CD4-positive, alpha-beta memory T cell (primary cell): ENCODE measurements at regions of chr12 and their contacts with region 1.

Region 1: GRCh38 chr12:75437564-75437963 is 43.0 kb upstream of the GLIPR1 start:
- DNase-seq: peak; percentile 43 to 61 (median 51)
- H3K4me3 ChIP-seq: no peak overlapping the region
- H3K4me3 Mint-ChIP-seq: peak overlapping the region in 2 of 8 donors; percentile 17 to 43
- H3K27ac ChIP-seq: no peak overlapping the region
- H3K27ac Mint-ChIP-seq: peak overlapping the region in 5 of 7 donors; percentile 52 to 91 (median 57)
- H3K4me1 ChIP-seq: peaks cover 13% of the 10 kb centered on the region
- H3K4me1 Mint-ChIP-seq: peaks cover 11 to 17% (median 15%) of the 10 kb centered on the region in 4 donors
- H3K27me3 ChIP-seq: no peaks in the 10 kb centered on the region
- H3K27me3 Mint-ChIP-seq: no peaks in the 10 kb centered on the region

Region 2: DNA sequence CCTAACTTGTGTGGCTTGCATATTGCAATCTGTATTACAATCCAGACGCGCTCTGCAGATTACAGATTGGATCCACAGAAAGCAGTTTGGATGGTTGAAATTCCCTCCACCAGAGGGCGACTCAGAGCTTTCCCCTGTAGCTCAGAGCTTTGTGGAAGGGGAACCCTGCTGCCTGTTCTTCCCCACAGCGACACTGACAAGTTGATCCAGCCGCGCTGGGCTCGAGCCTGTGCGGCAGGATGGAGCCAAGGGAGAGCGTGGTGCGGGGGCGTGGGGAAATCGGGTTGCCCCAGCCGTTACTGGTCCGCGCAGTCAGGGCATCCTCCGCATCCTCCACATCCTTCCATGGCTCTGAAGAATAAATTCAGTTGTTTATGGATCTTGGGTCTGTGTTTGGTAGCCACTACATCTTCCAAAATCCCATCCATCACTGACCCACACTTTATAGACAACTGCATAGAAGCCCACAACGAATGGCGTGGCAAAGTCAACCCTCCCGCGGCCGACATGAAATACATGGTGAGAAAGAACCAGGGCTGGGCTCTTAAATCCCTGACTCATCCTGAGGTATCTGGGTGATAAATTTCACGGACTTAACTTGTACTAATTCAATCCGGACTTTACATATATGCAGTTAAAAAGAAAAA is 103.1 kb before region 1 on chr12 and contains the start of gene GLIPR1L1:
- CTCF ChIA-PET with region 1: interaction called, 10 read pairs
- POLR2A ChIA-PET with region 1: interaction called, 3 read pairs
- intact Hi-C with region 1: loop called (anchors 5 kb)
- DNase-seq: peak; percentile 76 to 82 (median 77)
- H3K4me3 ChIP-seq: peak within 1 kb of the TSS in 1 of 2 donors; percentile 54
- H3K4me3 Mint-ChIP-seq: peak within 1 kb of the TSS; percentile 70 to 86 (median 80)
- H3K27ac ChIP-seq: no peak within 1 kb of the TSS
- H3K27ac Mint-ChIP-seq: peak within 1 kb of the TSS in 1 of 7 donors; percentile 54
- H3K4me1 ChIP-seq: peaks cover 21% of the 10 kb centered on the region
- H3K4me1 Mint-ChIP-seq: peaks cover 13 to 21% (median 17%) of the 10 kb centered on the region in 4 donors
- H3K27me3 ChIP-seq: peaks cover 6% of the 10 kb centered on the region
- H3K27me3 Mint-ChIP-seq: peaks cover 6 to 12% of the 10 kb centered on the region in 2 donors
- total RNA-seq, gene GLIPR1L1: not detected

Region 3: GRCh38 chr12:75452675-75453330 is 15.2 kb after region 1 on chr12:
- CTCF ChIA-PET with region 1: interaction called, 7 read pairs
- POLR2A ChIA-PET with region 1: interaction called, 14 read pairs
- intact Hi-C with region 1: loop called (anchors 2 kb)
- DNase-seq: no peak
- H3K4me3 ChIP-seq: no peak overlapping the region
- H3K4me3 Mint-ChIP-seq: no peak overlapping the region
- H3K27ac ChIP-seq: no peak overlapping the region
- H3K27ac Mint-ChIP-seq: no peak overlapping the region
- H3K4me1 ChIP-seq: peaks cover 18% of the 10 kb centered on the region
- H3K4me1 Mint-ChIP-seq: peaks cover 15 to 24% (median 18%) of the 10 kb centered on the region in 4 donors
- H3K27me3 ChIP-seq: no peaks in the 10 kb centered on the region
- H3K27me3 Mint-ChIP-seq: no peaks in the 10 kb centered on the region

Region 4: DNA sequence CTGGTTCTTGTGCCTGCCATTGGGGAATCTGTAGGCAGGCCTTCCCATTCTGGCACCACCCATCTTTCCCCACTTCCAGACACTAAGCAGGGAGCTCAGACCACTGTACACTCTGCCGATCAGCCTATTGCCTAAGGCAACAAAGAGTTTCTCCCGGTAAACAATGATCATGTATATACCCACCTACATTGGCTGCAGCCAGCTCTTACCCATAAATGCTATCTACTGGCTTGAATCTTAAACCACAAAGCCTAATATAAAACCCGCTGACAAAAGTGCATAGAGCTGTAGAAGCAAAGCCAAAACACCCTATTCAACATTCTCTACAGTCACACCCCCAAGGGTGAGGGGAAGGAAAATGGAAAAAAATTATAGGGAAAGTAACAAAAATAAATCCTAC is 22.2 kb after region 1 on chr12:
- CTCF ChIA-PET with region 1: interaction called, 13 read pairs
- POLR2A ChIA-PET with region 1: interaction called, 14 read pairs
- intact Hi-C with region 1: loop called (anchors 2 kb)
- DNase-seq: no peak
- H3K4me3 ChIP-seq: peak overlapping the region in 1 of 2 donors; percentile 11
- H3K4me3 Mint-ChIP-seq: peak overlapping the region in 7 of 8 donors; percentile 19 to 79 (median 64)
- H3K27ac ChIP-seq: no peak overlapping the region
- H3K27ac Mint-ChIP-seq: peak overlapping the region; percentile 2 to 88 (median 72)
- H3K4me1 ChIP-seq: peaks cover 48% of the 10 kb centered on the region
- H3K4me1 Mint-ChIP-seq: peaks cover 42 to 70% (median 55%) of the 10 kb centered on the region in 4 donors
- H3K27me3 ChIP-seq: no peaks in the 10 kb centered on the region
- H3K27me3 Mint-ChIP-seq: no peaks in the 10 kb centered on the region

Region 5: GRCh38 chr12:75471902-75472890 is 34.6 kb after region 1 on chr12:
- CTCF ChIA-PET with region 1: interaction called, 158 read pairs
- POLR2A ChIA-PET with region 1: interaction called, 3 read pairs
- intact Hi-C with region 1: no loop called
- DNase-seq: no peak
- H3K4me3 ChIP-seq: no peak overlapping the region
- H3K4me3 Mint-ChIP-seq: no peak overlapping the region
- H3K27ac ChIP-seq: no peak overlapping the region
- H3K27ac Mint-ChIP-seq: no peak overlapping the region
- H3K4me1 ChIP-seq: peaks cover 5% of the 10 kb centered on the region
- H3K4me1 Mint-ChIP-seq: peaks cover 5 to 9% (median 5%) of the 10 kb centered on the region in 4 donors
- H3K27me3 ChIP-seq: no peaks in the 10 kb centered on the region
- H3K27me3 Mint-ChIP-seq: no peaks in the 10 kb centered on the region

Region 6: GRCh38 chr12:75489613-75490210 is 52.1 kb after region 1 on chr12:
- CTCF ChIA-PET with region 1: interaction called, 158 read pairs
- POLR2A ChIA-PET with region 1: interaction called, 13 read pairs
- intact Hi-C with region 1: loop called (anchors 1 kb)
- DNase-seq: peak in 1 of 5 donors; percentile 41
- H3K4me3 ChIP-seq: no peak overlapping the region
- H3K4me3 Mint-ChIP-seq: peak overlapping the region in 7 of 8 donors; percentile 2 to 72 (median 28)
- H3K27ac ChIP-seq: peak overlapping the region; percentile 3
- H3K27ac Mint-ChIP-seq: peak overlapping the region; percentile 57 to 92 (median 83)
- H3K4me1 ChIP-seq: peaks cover 55% of the 10 kb centered on the region
- H3K4me1 Mint-ChIP-seq: peaks cover 47 to 81% (median 59%) of the 10 kb centered on the region in 4 donors
- H3K27me3 ChIP-seq: no peaks in the 10 kb centered on the region
- H3K27me3 Mint-ChIP-seq: no peaks in the 10 kb centered on the region

Region 7: DNA sequence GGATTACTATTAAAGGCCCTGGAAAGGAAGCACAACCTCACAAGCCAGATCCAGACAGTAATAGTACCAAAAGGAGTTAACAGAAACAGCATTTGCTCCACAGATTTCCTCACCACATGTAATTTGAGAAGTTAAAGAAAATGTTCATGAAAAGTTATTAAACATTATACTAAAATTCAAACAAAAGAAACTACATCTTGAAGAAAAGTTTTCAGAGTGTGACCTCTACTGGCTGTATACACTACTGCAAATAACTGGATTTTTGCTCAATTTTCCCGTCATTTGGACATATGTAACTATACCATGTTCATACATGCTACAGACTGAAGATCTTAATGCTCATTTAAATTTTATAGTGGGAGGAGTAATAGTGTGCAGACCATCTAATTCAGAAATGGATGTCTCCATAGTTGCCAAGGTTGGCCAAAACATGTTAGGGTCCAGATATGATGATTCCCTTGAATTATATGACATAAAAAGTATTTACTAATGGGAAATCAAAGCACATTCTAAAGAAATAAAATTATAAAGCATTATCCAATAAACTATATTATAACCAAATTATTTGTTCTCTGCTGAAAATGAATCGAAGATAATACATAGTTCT is 68.2 kb after region 1 on chr12:
- CTCF ChIA-PET with region 1: interaction called, 44 read pairs
- POLR2A ChIA-PET with region 1: interaction called, 7 read pairs
- intact Hi-C with region 1: loop called (anchors 1 kb)
- DNase-seq: peak in 4 of 5 donors; percentile 28 to 37 (median 36)
- H3K4me3 ChIP-seq: no peak overlapping the region
- H3K4me3 Mint-ChIP-seq: no peak overlapping the region
- H3K27ac ChIP-seq: no peak overlapping the region
- H3K27ac Mint-ChIP-seq: peak overlapping the region; percentile 12 to 64 (median 52)
- H3K4me1 ChIP-seq: peaks cover 19% of the 10 kb centered on the region
- H3K4me1 Mint-ChIP-seq: peaks cover 22 to 30% (median 25%) of the 10 kb centered on the region in 4 donors
- H3K27me3 ChIP-seq: no peaks in the 10 kb centered on the region
- H3K27me3 Mint-ChIP-seq: no peaks in the 10 kb centered on the region

Region 8: DNA sequence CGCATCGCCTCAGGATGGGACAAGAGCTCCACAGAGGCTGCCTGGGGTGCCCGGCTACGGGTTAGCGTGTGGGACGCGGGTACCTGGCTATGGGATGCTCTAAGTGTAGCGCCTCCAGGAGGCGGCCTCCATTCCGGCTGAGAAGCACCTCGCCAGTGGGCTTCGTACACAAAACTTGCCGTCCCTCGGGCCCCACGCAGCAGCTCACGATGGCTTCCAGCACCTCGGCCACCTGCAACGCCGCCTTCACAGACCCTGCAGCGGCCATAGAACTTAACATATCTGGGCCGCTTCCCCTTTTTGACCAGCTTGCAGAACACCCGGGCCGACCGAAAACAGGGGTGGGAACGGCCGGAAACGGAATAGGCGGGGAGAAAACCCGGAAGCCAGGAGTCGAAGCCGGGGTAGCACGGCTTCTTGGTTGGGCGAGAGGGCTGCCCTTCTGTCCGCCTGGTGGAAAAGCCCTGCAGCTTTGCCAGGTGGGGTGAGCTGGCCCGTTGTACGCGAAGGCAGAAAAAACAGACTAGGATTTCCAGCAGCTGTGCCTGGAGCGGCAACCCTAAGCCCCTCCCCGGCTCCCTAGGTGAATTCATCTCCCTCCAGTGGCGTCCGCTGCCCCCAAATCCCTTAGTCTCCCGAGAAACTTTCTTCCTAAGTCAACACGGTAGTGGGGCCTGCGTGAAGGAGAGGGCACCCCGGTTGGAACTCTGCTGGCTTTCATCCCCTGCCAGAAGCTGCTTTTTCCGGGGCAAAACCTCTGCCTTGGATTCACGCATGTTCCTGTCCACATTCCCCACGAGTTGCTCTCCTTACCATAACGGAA is 910.7 kb after region 1 on chr12 and contains the start of gene BBS10:
- CTCF ChIA-PET with region 1: no interaction called
- POLR2A ChIA-PET with region 1: no interaction called
- intact Hi-C with region 1: no loop called
- DNase-seq: peak; percentile 83 to 89 (median 85)
- H3K4me3 ChIP-seq: peak within 1 kb of the TSS; percentile 64 to 82
- H3K4me3 Mint-ChIP-seq: peak within 1 kb of the TSS; percentile 95 to 99 (median 96)
- H3K27ac ChIP-seq: peak within 1 kb of the TSS; percentile 63
- H3K27ac Mint-ChIP-seq: peak within 1 kb of the TSS; percentile 90 to 97 (median 94)
- H3K4me1 ChIP-seq: peaks cover 23% of the 10 kb centered on the region
- H3K4me1 Mint-ChIP-seq: peaks cover 13 to 43% (median 23%) of the 10 kb centered on the region in 4 donors
- H3K27me3 ChIP-seq: no peaks in the 10 kb centered on the region
- H3K27me3 Mint-ChIP-seq: no peaks in the 10 kb centered on the region
- total RNA-seq, gene BBS10: 11.5 to 12.6 TPM